ENCODE measurements at regions of chr10 and their contacts with region 1.

Region 1: DNA sequence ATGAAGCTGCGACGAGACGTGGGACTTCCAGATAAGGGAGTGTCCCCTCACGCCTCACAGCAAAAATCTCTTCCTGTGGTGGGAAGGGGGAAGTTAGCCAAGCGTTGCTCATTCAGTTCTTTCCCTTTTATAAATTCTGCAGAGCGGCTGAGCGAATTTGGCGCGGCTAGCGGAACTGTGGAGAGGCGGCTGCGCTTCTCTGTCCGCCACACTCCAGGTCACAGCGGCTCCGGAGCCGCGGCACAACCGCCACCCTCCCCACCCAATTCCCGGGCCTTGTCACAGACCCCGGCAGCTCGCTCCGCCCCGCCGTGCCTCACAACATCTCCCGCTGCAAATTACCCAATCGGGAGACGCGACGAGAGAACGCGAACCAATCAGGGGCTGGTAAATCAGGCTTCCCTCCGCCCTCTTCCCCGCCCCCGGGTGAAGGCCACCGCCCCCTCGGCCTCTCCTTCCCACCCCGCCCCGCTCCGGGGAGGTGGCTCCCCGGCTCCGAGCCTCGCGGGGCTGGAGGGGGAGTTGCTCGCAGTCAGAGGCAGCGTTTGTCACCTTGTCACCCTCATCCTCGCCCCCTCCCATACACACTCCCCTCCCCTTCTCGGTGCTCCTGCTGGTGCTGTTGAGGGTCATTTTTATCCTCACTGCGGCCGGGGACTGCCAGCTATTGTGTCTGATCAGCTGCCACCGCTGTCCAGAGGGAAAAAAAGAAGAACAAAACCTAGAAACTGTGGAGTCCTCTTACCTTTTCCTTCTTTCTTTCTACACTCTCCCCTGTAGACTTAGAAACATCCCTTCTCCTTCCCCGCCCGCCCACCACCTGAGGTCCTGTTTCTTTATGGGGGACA is 918 bp upstream of the ARHGAP21 start:
- DNase-seq: peak; percentile 88
- ATAC-seq: peak; percentile 88
- H3K4me3 Mint-ChIP-seq: peak overlapping the region; percentile 91
- H3K27ac Mint-ChIP-seq: peak overlapping the region; percentile 87
- H3K4me1 Mint-ChIP-seq: peaks cover 28% of the 10 kb centered on the region
- H3K27me3 Mint-ChIP-seq: peaks cover 3% of the 10 kb centered on the region
- CTCF ChIP-seq: no peak

Region 2: DNA sequence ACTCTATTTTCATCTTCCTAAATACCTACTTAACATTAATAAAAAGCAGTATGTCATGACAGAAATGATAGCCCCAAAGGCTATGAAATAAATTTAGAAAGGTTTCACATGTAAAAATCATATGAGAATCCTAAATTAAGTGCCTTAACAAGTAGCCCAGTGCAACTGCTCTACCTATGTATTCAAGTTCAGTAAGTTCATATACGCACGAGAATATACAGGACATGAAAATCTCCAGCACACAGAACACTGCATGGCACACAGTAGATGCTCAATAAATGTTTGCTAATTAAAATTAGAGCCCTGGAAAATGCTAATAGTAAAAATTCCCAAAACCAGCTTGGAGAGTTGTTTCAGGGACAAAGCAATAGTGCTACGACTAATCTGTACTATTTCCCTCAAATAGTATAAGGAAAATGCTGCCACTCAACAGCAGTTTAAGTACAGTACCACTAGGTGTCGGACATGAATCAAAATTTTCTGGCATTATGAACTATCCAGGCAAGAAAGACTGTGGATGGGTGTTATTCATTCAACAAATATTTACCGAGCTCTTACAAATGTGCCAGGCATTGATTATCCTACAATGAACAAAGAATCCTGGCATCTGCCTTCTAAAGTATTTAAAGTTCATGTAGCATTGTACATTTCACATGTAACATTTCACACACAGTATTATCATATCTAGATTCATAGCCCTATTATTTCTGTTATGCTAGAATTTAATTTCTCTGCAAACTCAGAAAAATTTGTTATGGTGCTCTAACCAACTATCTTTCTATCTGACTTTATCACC is 81.8 kb before region 1 on chr10:
- CTCF ChIA-PET with region 1: interaction called, 4 read pairs
- POLR2A ChIA-PET with region 1: no interaction called
- intact Hi-C with region 1: loop called (anchors 1 kb)
- DNase-seq: no peak
- ATAC-seq: peak; percentile 56
- H3K4me3 Mint-ChIP-seq: no peak overlapping the region
- H3K27ac Mint-ChIP-seq: no peak overlapping the region
- H3K4me1 Mint-ChIP-seq: peaks cover 4% of the 10 kb centered on the region
- H3K27me3 Mint-ChIP-seq: no peaks in the 10 kb centered on the region
- CTCF ChIP-seq: peak; percentile 81

Region 3: GRCh38 chr10:24706479-24707118 is 18.0 kb before region 1 on chr10:
- CTCF ChIA-PET with region 1: no interaction called
- POLR2A ChIA-PET with region 1: no interaction called
- intact Hi-C with region 1: no loop called
- DNase-seq: no peak
- ATAC-seq: no peak
- H3K4me3 Mint-ChIP-seq: no peak overlapping the region
- H3K27ac Mint-ChIP-seq: no peak overlapping the region
- H3K4me1 Mint-ChIP-seq: peaks cover under 1% of the 10 kb centered on the region
- H3K27me3 Mint-ChIP-seq: peaks cover 3% of the 10 kb centered on the region
- CTCF ChIP-seq: no peak

Region 4: GRCh38 chr10:24882047-24882698 is 157.6 kb after region 1 on chr10:
- CTCF ChIA-PET with region 1: no interaction called
- POLR2A ChIA-PET with region 1: no interaction called
- intact Hi-C with region 1: loop called (anchors 2 kb)
- DNase-seq: no peak
- ATAC-seq: peak; percentile 61
- H3K4me3 Mint-ChIP-seq: peak overlapping the region; percentile 21
- H3K27ac Mint-ChIP-seq: no peak overlapping the region
- H3K4me1 Mint-ChIP-seq: peaks cover 27% of the 10 kb centered on the region
- H3K27me3 Mint-ChIP-seq: no peaks in the 10 kb centered on the region
- CTCF ChIP-seq: no peak

Region 5: DNA sequence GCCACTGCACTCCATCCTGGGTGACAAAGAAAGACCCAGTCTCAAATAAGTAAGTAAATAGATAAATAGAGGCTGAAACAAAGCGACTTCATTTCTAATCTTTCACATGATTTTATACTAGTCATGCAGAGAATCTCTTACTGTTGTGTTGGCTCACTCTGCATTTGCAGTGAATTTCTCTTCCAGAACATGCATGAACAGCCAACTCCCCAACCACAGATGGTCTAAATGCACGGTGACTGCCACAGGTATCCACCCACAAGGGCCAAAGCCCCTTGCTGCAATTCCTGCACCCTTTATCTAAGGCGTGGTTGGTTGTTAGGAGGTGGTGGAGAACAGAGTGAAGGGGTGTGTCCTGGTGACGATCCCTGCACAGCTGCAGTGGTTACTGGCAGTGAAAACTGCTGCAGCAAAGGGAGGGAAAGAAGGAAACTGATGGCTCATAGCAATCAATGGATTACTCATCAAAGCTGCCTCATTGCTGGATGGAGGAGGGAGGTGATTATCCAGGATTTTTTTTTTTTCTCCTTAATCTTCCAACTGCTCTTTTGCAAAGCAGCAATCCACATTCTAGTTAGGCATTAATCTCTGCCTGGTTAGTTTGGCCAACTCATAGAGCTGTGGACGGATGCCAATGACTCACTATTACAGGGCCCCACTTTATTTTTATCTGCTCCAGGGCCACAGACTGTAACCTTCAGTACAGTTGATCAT is 177.2 kb after region 1 on chr10:
- CTCF ChIA-PET with region 1: no interaction called
- POLR2A ChIA-PET with region 1: no interaction called
- intact Hi-C with region 1: loop called (anchors 1 kb)
- DNase-seq: no peak
- ATAC-seq: no peak
- H3K4me3 Mint-ChIP-seq: peak overlapping the region; percentile 41
- H3K27ac Mint-ChIP-seq: peak overlapping the region; percentile 75
- H3K4me1 Mint-ChIP-seq: peaks cover 26% of the 10 kb centered on the region
- H3K27me3 Mint-ChIP-seq: no peaks in the 10 kb centered on the region
- CTCF ChIP-seq: no peak

Region 6: GRCh38 chr10:24952707-24953645 is 228.4 kb after region 1 on chr10:
- CTCF ChIA-PET with region 1: no interaction called
- POLR2A ChIA-PET with region 1: interaction called, 5 read pairs
- intact Hi-C with region 1: loop called (anchors 1 kb)
- DNase-seq: peak; percentile 48
- ATAC-seq: peak; percentile 86
- H3K4me3 Mint-ChIP-seq: peak overlapping the region; percentile 76
- H3K27ac Mint-ChIP-seq: peak overlapping the region; percentile 51
- H3K4me1 Mint-ChIP-seq: peaks cover 7% of the 10 kb centered on the region
- H3K27me3 Mint-ChIP-seq: peaks cover 15% of the 10 kb centered on the region
- CTCF ChIP-seq: no peak

Region 7: GRCh38 chr10:25016376-25017154 is 292.0 kb after region 1 on chr10 and contains the start of gene THNSL1:
- CTCF ChIA-PET with region 1: no interaction called
- POLR2A ChIA-PET with region 1: interaction called, 8 read pairs
- intact Hi-C with region 1: loop called (anchors 1 kb)
- DNase-seq: peak; percentile 85
- ATAC-seq: peak; percentile 95
- H3K4me3 Mint-ChIP-seq: peak within 1 kb of the TSS; percentile 88
- H3K27ac Mint-ChIP-seq: peak within 1 kb of the TSS; percentile 93
- H3K4me1 Mint-ChIP-seq: peaks cover 27% of the 10 kb centered on the region
- H3K27me3 Mint-ChIP-seq: no peaks in the 10 kb centered on the region
- CTCF ChIP-seq: no peak
- total RNA-seq, gene THNSL1: 3.8 TPM in 2 replicates

Region 8: DNA sequence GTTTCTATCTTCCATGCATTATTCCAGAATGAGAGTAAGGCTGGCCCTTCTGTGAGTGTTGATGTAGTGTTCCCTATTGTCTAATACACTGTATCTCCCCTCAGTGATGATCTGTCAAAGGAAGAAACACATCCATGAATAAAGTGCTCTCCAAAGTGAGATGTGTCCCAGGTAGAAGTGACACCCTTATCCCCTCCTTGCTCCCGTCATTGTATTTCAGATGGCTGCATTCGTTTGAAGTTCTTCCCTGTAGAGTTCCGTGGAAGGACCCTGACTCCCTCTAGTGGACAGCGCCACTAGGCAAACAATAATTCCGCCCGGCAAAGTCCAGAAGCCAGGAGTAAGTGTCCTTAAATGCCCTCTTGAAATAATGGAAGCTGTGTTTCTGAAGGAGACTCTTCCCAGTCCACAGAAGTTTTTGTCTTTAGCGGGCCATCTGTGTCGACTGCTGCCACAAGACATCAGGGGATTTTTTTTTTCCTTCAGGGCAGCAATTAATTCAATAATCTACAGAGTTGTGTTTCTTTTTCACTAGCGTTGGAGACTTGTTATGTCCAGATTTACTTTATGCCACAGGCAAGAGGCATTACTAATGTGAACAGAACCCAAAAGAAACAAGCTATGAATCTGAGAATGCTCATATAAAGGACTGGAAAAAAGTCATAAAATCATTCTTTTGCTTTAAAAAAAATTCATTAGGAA is 356.4 kb after region 1 on chr10:
- CTCF ChIA-PET with region 1: no interaction called
- POLR2A ChIA-PET with region 1: no interaction called
- intact Hi-C with region 1: loop called (anchors 2 kb)
- DNase-seq: peak; percentile 33
- ATAC-seq: peak; percentile 28
- H3K4me3 Mint-ChIP-seq: no peak overlapping the region
- H3K27ac Mint-ChIP-seq: no peak overlapping the region
- H3K4me1 Mint-ChIP-seq: no peaks in the 10 kb centered on the region
- H3K27me3 Mint-ChIP-seq: peaks cover 13% of the 10 kb centered on the region
- CTCF ChIP-seq: no peak

Measured in activated B cell treated with CpG ODN at 0.5 μM for 24 hours (primary cell).